CD4-positive, alpha-beta T cell (primary cell): ENCODE measurements at regions of chr21 and their contacts with region 1.

Region 1: GRCh38 chr21:28892199-28893111 is 100.2 kb downstream of the LTN1 start:
- DNase-seq: no peak
- ATAC-seq: no peak
- H3K4me3 ChIP-seq: no peak overlapping the region
- H3K4me3 Mint-ChIP-seq: no peak overlapping the region
- H3K27ac ChIP-seq: no peak overlapping the region
- H3K27ac Mint-ChIP-seq: no peak overlapping the region
- H3K4me1 ChIP-seq: no peaks in the 10 kb centered on the region
- H3K4me1 Mint-ChIP-seq: no peaks in the 10 kb centered on the region
- H3K27me3 ChIP-seq: peaks cover 0 to 5% of the 10 kb centered on the region in 2 experiments
- H3K27me3 Mint-ChIP-seq: peaks cover 3% of the 10 kb centered on the region
- CTCF ChIP-seq: no peak

Region 2: GRCh38 chr21:28624626-28625025 is 267.8 kb before region 1 on chr21:
- CTCF ChIA-PET with region 1: no interaction called
- POLR2A ChIA-PET with region 1: no interaction called
- intact Hi-C with region 1: no loop called
- DNase-seq: no peak
- ATAC-seq: no peak
- H3K4me3 ChIP-seq: no peak overlapping the region
- H3K4me3 Mint-ChIP-seq: no peak overlapping the region
- H3K27ac ChIP-seq: no peak overlapping the region
- H3K27ac Mint-ChIP-seq: no peak overlapping the region
- H3K4me1 ChIP-seq: no peaks in the 10 kb centered on the region
- H3K4me1 Mint-ChIP-seq: peaks cover 8% of the 10 kb centered on the region
- H3K27me3 ChIP-seq: no peaks in the 10 kb centered on the region
- H3K27me3 Mint-ChIP-seq: no peaks in the 10 kb centered on the region
- CTCF ChIP-seq: no peak

Region 3: DNA sequence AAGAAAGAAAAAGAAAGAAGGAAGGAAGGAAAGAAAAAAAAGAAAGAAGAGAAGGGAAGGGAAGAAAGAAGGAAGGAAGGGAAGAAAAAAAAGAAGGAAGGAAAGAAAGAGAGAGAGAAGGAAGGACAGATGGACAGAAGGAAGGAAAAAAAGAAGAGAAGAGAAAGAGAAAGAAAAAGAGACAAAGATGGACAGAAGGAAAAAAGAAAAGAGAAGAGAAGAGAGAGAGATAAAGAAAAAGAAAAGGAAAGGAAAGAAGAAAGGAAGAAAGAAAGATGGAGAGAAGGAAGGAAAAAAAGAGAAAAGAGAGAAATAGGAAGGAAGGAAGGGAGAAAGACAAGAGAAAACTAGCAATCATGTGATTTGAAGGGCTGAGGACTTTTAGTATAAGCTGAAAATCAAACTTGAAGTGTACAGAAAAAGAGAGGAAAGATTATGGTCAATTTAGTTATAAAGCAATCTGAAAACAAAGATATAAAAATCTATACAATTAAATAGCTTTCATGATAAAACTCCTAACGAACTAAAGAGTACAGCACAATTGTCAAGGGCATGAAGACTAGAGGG is 15.1 kb before region 1 on chr21:
- CTCF ChIA-PET with region 1: no interaction called
- POLR2A ChIA-PET with region 1: no interaction called
- intact Hi-C with region 1: loop called in 1 of 2 experiments (anchors 1 kb)
- DNase-seq: no peak
- ATAC-seq: no peak
- H3K4me3 ChIP-seq: no peak overlapping the region
- H3K4me3 Mint-ChIP-seq: no peak overlapping the region
- H3K27ac ChIP-seq: no peak overlapping the region
- H3K27ac Mint-ChIP-seq: no peak overlapping the region
- H3K4me1 ChIP-seq: no peaks in the 10 kb centered on the region
- H3K4me1 Mint-ChIP-seq: no peaks in the 10 kb centered on the region
- H3K27me3 ChIP-seq: no peaks in the 10 kb centered on the region
- H3K27me3 Mint-ChIP-seq: no peaks in the 10 kb centered on the region
- CTCF ChIP-seq: peak; percentile 27

Region 4: GRCh38 chr21:28904961-28905435 is 12.5 kb after region 1 on chr21:
- CTCF ChIA-PET with region 1: no interaction called
- POLR2A ChIA-PET with region 1: no interaction called
- intact Hi-C with region 1: no loop called
- DNase-seq: no peak
- ATAC-seq: no peak
- H3K4me3 ChIP-seq: no peak overlapping the region
- H3K4me3 Mint-ChIP-seq: no peak overlapping the region
- H3K27ac ChIP-seq: no peak overlapping the region
- H3K27ac Mint-ChIP-seq: no peak overlapping the region
- H3K4me1 ChIP-seq: no peaks in the 10 kb centered on the region
- H3K4me1 Mint-ChIP-seq: no peaks in the 10 kb centered on the region
- H3K27me3 ChIP-seq: no peaks in the 10 kb centered on the region
- H3K27me3 Mint-ChIP-seq: no peaks in the 10 kb centered on the region
- CTCF ChIP-seq: no peak